AG04450 (cell line): ENCODE measurements at regions of chr2 and their contacts with region 1.

Region 1: GRCh38 chr2:134245340-134245984 is 8.4 kb upstream of the MGAT5 start:
- DNase-seq: no peak
- H3K4me3 ChIP-seq: no peak overlapping the region
- H3K27ac ChIP-seq: no peak overlapping the region
- H3K27me3 ChIP-seq: no peaks in the 10 kb centered on the region
- CTCF ChIP-seq: peak; percentile 85

Region 2: DNA sequence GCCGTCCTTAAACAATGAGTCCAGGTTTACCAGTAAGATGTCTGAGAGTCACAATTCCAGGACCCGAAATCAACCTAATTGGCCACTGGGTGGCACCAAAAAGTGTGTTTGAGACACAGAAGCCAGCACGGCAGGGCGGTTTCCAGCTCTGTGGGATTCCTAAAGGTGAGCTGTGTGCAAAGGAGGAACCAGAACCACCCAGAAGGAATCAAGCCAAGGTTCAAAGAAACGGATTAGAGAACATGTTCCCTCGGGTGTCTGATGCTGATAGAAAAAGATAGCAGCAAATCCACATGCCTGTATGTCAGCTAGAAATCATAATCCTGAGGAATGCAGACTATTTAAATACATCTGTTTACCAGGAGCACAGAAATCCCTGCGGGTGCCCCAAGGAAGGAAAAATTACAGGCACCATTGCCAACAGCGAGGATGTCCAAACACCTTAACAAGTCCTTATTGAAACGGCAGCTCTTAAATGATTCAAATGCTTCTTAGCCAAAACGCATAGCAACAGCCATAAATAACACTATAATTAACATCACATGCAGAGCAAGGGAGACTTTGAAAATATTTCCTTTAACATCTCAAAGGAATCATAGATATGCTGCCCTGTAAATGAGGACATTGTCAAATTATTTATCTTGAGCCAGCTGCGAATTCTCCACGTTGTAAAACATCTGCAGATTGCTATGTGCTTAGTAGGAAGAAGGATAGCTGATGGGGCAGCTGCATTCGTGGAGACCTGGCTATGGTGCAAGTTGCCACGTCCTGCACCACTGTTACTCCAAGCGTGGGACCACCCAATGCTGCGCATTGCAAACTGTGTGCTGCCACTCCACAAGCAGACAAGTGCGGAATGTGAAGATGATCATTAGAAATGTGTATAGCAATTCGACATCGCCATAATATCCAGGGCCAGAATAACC is 358.5 kb before region 1 on chr2:
- CTCF ChIA-PET with region 1: interaction called, 50 read pairs
- POLR2A ChIA-PET with region 1: no interaction called
- DNase-seq: peak; percentile 77
- H3K4me3 ChIP-seq: no peak overlapping the region; the same call in 1 of the 2 replicates
- H3K27ac ChIP-seq: peak overlapping the region; percentile 75
- H3K27me3 ChIP-seq: peaks cover 3% of the 10 kb centered on the region
- CTCF ChIP-seq: peak; percentile 75

Region 3: GRCh38 chr2:134207564-134208209 is 37.8 kb before region 1 on chr2:
- CTCF ChIA-PET with region 1: interaction called, 21 read pairs
- POLR2A ChIA-PET with region 1: no interaction called
- DNase-seq: no peak
- H3K4me3 ChIP-seq: no peak overlapping the region
- H3K27ac ChIP-seq: no peak overlapping the region
- H3K27me3 ChIP-seq: no peaks in the 10 kb centered on the region
- CTCF ChIP-seq: peak; percentile 54

Region 4: DNA sequence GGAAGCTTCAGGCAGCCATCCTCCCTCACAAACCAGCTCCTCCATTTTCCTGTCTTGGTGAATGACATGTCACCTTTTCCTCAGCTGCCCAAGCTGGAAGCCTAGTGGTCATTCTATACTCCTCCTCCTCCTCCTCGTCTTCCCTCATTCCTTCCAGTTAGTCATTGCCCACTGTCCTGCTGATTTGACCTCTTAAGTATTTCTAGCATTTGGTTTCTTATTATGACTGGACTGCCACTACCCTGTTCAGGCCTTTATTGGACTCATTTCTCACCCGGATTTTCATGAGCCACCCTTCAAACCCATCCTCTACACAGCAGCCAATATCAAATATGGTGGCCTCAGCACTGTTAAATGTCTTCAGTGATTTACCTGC is 13.5 kb before region 1 on chr2:
- CTCF ChIA-PET with region 1: interaction called, 13 read pairs
- POLR2A ChIA-PET with region 1: no interaction called
- DNase-seq: no peak
- H3K4me3 ChIP-seq: no peak overlapping the region
- H3K27ac ChIP-seq: no peak overlapping the region
- H3K27me3 ChIP-seq: no peaks in the 10 kb centered on the region
- CTCF ChIP-seq: no peak

Region 5: DNA sequence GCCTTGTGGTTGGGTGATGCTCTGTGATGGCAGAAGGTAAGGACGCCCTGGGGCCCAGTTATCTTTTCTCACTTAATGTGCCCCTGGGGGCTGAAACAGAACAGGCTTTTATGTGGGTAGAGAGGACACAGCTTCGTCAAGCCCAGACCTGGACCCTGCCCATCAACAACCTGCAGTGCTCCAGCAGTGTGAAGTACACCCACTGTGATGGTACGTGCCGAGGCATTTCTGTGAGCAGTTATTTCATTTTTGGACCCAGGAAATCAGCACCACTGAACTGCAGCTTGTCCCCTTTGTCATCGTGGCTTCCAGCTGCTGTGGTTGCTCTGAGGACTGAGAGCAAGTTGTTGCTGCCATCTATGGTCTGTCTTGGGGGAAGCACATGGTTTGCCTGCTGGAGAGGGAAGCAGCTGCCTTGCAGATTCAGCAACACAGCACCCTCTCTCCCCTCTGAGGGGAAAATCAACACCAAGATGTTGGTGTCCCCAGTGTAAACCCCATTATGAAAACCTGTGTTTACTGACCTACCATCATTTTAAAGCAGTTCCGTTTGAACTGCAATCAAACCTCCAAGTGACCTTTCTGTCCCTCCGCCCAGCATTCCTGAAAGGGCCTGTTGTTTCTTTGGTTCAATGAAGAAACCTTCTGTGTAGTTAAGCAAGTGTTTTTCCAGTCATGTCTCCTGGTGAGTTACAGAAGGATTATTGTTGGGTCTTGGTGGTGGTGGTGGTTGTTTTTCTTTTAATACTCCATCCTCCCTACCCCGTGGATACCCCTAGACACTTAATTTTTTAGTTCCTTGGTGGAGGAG is 166.6 kb after region 1 on chr2:
- CTCF ChIA-PET with region 1: interaction called, 12 read pairs
- POLR2A ChIA-PET with region 1: interaction called, 3 read pairs
- DNase-seq: no peak
- H3K4me3 ChIP-seq: no peak overlapping the region
- H3K27ac ChIP-seq: peak overlapping the region; percentile 4
- H3K27me3 ChIP-seq: no peaks in the 10 kb centered on the region
- CTCF ChIP-seq: peak; percentile 77

Region 6: DNA sequence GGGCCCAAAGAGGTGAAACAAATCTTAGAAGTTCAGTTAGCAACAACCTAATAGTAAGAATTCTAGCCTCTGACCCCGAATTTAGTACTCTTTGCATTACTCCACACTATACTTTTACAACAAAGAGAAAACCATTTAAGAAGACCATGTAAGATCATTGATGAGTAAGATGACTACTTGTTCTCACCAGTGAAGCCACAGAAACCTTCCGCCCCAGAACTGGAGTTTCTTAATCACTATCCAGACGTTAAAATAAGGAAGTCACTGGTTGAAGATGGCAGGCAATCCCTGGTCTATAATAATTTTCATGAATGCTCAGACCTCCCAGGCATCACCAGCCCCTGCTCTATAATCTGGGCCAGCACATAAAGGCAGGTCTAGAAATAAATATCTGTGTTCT is 378.3 kb after region 1 on chr2:
- CTCF ChIA-PET with region 1: no interaction called
- POLR2A ChIA-PET with region 1: no interaction called
- DNase-seq: no peak
- H3K4me3 ChIP-seq: no peak overlapping the region
- H3K27ac ChIP-seq: no peak overlapping the region
- H3K27me3 ChIP-seq: no peaks in the 10 kb centered on the region
- CTCF ChIP-seq: no peak